K562 (cell line): ENCODE measurements at regions of chr11 and their contacts with region 1.

Region 1: DNA sequence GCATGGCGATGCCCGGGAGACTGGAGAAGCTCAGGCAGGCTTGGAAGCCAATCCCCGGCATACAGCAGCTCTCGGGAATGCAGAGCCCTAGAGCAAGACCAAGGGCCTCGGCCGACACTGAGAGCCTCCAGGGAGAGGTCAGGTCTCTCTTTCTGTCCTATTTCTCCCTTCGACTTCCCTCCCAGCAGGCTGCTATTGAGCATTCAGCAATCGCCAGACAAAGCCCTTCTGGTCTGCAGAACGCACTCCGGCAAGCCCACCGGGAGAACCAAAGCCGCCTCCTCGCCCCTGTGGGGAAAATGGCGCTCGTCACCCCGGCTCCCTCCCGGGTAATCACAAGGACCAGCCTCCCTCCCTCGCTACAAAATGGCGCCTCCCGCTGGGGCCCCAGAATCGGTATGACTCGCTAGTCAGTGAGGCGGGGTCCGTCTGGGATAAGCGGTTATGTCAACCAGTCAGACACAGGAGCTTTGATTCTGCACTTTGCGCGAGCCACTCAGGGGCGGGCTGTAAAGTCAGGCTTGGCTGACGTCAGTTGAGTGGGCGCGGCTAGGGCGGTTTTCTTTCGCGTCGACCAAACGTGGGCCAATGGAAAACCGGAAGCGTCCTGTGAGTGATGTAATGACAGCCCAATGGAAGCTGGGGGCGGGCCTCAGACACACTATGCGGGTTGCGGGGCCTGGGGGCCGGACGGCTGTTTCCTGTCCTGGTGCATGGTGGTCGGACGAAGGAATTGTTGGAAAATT is at the start of gene ZNF143:
- DNase-seq: peak; percentile 90 to 100 (median 95)
- ATAC-seq: peak; percentile 90
- H3K4me3 ChIP-seq: peak within 1 kb of the TSS; percentile 80
- H3K27ac ChIP-seq: peak within 1 kb of the TSS; percentile 99
- H3K4me1 ChIP-seq: peaks cover 13 to 15% of the 10 kb centered on the region in 2 experiments; a peak in 4 of 5 replicates
- H3K27me3 ChIP-seq: no peaks in the 10 kb centered on the region
- CTCF ChIP-seq: no peak
- EP300 ChIP-seq: peak; percentile 7
- POLR2A ChIP-seq: peak; percentile 89
- RAD21 ChIP-seq: no peak
- polyA plus RNA-seq, gene ZNF143: 18.4 to 34.4 TPM

Region 2: GRCh38 chr11:9314291-9315036 is 146.0 kb before region 1 on chr11 and contains the start of gene TMEM41B:
- CTCF ChIA-PET with region 1: no interaction called
- POLR2A ChIA-PET with region 1: interaction called, 13 read pairs
- in situ Hi-C with region 1: no loop called
- intact Hi-C with region 1: no loop called
- DNase-seq: peak; percentile 99
- ATAC-seq: peak; percentile 95
- H3K4me3 ChIP-seq: peak within 1 kb of the TSS; percentile 97
- H3K27ac ChIP-seq: peak within 1 kb of the TSS; percentile 100
- H3K4me1 ChIP-seq: peaks cover 23 to 32% of the 10 kb centered on the region in 2 experiments
- H3K27me3 ChIP-seq: no peaks in the 10 kb centered on the region
- CTCF ChIP-seq: peak in 2 of 3 experiments; percentile 15 to 20; a peak in 2 of 6 replicates
- EP300 ChIP-seq: peak; percentile 68
- POLR2A ChIP-seq: peak; percentile 94
- RAD21 ChIP-seq: no peak; a peak in 1 of 4 replicates
- polyA plus RNA-seq, gene TMEM41B: 17.1 to 24.7 TPM

Region 3: GRCh38 chr11:9438611-9439010 is 21.9 kb before region 1 on chr11:
- CTCF ChIA-PET with region 1: no interaction called
- POLR2A ChIA-PET with region 1: interaction called, 10 read pairs
- in situ Hi-C with region 1: no loop called
- intact Hi-C with region 1: no loop called
- DNase-seq: no peak
- ATAC-seq: no peak
- H3K4me3 ChIP-seq: no peak overlapping the region
- H3K27ac ChIP-seq: no peak overlapping the region
- H3K4me1 ChIP-seq: no peaks in the 10 kb centered on the region
- H3K27me3 ChIP-seq: no peaks in the 10 kb centered on the region
- CTCF ChIP-seq: no peak
- EP300 ChIP-seq: no peak
- POLR2A ChIP-seq: no peak
- RAD21 ChIP-seq: no peak

Region 4: GRCh38 chr11:9473408-9473807 is 12.9 kb after region 1 on chr11:
- CTCF ChIA-PET with region 1: no interaction called
- POLR2A ChIA-PET with region 1: interaction called, 25 read pairs
- in situ Hi-C with region 1: no loop called
- intact Hi-C with region 1: no loop called
- DNase-seq: no peak
- ATAC-seq: no peak
- H3K4me3 ChIP-seq: no peak overlapping the region
- H3K27ac ChIP-seq: no peak overlapping the region
- H3K4me1 ChIP-seq: no peaks in the 10 kb centered on the region; a peak in 1 of 5 replicates
- H3K27me3 ChIP-seq: no peaks in the 10 kb centered on the region
- CTCF ChIP-seq: no peak
- EP300 ChIP-seq: no peak
- POLR2A ChIP-seq: no peak
- RAD21 ChIP-seq: no peak

Region 5: GRCh38 chr11:9498457-9499078 is 38.1 kb after region 1 on chr11:
- CTCF ChIA-PET with region 1: no interaction called
- POLR2A ChIA-PET with region 1: interaction called, 12 read pairs
- in situ Hi-C with region 1: no loop called
- intact Hi-C with region 1: no loop called
- DNase-seq: no peak
- ATAC-seq: no peak
- H3K4me3 ChIP-seq: no peak overlapping the region
- H3K27ac ChIP-seq: no peak overlapping the region
- H3K4me1 ChIP-seq: peaks cover 0 to 6% of the 10 kb centered on the region in 2 experiments; a peak in 3 of 5 replicates
- H3K27me3 ChIP-seq: no peaks in the 10 kb centered on the region
- CTCF ChIP-seq: no peak
- EP300 ChIP-seq: no peak
- POLR2A ChIP-seq: no peak
- RAD21 ChIP-seq: no peak

Region 6: GRCh38 chr11:9613118-9613829 is 152.8 kb after region 1 on chr11:
- CTCF ChIA-PET with region 1: interaction called, 3 read pairs
- POLR2A ChIA-PET with region 1: no interaction called
- in situ Hi-C with region 1: no loop called
- intact Hi-C with region 1: loop called (anchors 5 kb)
- DNase-seq: peak; percentile 88 to 97 (median 92)
- ATAC-seq: peak; percentile 90
- H3K4me3 ChIP-seq: peak overlapping the region; percentile 46
- H3K27ac ChIP-seq: peak overlapping the region; percentile 95
- H3K4me1 ChIP-seq: peaks cover 19 to 21% of the 10 kb centered on the region in 2 experiments; a peak in 4 of 5 replicates
- H3K27me3 ChIP-seq: no peaks in the 10 kb centered on the region
- CTCF ChIP-seq: peak; percentile 94 to 98 (median 97)
- EP300 ChIP-seq: peak; percentile 64
- POLR2A ChIP-seq: peak; percentile 65
- RAD21 ChIP-seq: peak; percentile 93